ENCODE measurements at regions of chr17 and their contacts with region 1.

Region 1: GRCh38 chr17:35486920-35487732 is 38.6 kb upstream of the SLFN13 start:
- DNase-seq: peak in 1 of 2 donors; percentile 20
- ATAC-seq: no peak
- H3K4me3 ChIP-seq: peak overlapping the region; percentile 51 to 89 (median 58)
- H3K27ac ChIP-seq: peak overlapping the region in 2 of 4 donors; percentile 34 to 36
- H3K4me1 ChIP-seq: peaks cover 0 to 6% of the 10 kb centered on the region in 2 donors
- H3K27me3 ChIP-seq: peaks cover 55 to 68% (median 64%) of the 10 kb centered on the region in 3 donors
- CTCF ChIP-seq: no peak
- POLR2A ChIP-seq: no peak

Region 2: DNA sequence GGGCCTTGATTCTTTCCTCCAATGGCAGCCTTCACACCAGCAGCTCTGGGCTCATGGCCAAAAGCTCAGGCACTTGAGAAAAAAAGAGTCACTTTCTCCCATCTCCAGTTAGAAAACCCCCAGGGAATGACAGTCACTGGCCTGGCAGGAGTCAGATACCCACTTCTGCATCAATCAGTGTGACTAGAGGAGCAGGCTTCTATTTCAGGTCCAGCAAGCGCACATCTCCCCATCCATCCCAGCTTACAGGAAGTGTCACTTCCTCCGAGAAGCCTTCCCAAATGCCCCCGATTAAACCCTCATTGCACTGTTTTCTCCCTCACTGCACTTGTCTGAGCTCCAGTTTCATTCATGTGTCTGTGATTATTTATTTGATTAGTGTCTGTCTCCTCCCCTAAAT is 1093.7 kb before region 1 on chr17:
- in situ Hi-C with region 1: no loop called
- intact Hi-C with region 1: loop called (anchors 5 kb)
- DNase-seq: no peak
- ATAC-seq: no peak
- H3K4me3 ChIP-seq: no peak overlapping the region
- H3K27ac ChIP-seq: no peak overlapping the region
- H3K4me1 ChIP-seq: no peaks in the 10 kb centered on the region
- H3K27me3 ChIP-seq: no peaks in the 10 kb centered on the region
- CTCF ChIP-seq: no peak
- POLR2A ChIP-seq: no peak

Region 3: DNA sequence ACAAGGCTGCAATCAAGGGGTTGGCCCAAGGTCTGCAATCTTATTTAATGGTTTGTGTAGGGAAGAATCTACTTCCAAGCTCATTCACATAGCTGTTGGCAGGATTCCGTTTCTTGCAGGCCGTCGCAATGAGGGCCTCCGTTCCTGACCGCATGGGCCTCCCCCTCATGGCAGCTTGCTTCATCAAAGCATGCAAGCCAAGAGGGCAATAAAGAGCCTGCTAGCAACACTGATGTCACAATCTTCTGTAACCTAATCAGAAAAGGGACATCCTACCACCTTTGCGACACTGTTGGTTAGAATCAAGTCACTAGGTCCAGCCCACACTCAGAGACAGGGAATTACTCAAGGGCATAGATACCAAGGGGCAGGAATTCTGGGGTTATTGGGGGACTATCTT is 621.4 kb before region 1 on chr17:
- in situ Hi-C with region 1: no loop called
- intact Hi-C with region 1: no loop called
- DNase-seq: no peak
- ATAC-seq: no peak
- H3K4me3 ChIP-seq: no peak overlapping the region
- H3K27ac ChIP-seq: no peak overlapping the region
- H3K4me1 ChIP-seq: no peaks in the 10 kb centered on the region
- H3K27me3 ChIP-seq: no peaks in the 10 kb centered on the region
- CTCF ChIP-seq: no peak
- POLR2A ChIP-seq: no peak

Region 4: DNA sequence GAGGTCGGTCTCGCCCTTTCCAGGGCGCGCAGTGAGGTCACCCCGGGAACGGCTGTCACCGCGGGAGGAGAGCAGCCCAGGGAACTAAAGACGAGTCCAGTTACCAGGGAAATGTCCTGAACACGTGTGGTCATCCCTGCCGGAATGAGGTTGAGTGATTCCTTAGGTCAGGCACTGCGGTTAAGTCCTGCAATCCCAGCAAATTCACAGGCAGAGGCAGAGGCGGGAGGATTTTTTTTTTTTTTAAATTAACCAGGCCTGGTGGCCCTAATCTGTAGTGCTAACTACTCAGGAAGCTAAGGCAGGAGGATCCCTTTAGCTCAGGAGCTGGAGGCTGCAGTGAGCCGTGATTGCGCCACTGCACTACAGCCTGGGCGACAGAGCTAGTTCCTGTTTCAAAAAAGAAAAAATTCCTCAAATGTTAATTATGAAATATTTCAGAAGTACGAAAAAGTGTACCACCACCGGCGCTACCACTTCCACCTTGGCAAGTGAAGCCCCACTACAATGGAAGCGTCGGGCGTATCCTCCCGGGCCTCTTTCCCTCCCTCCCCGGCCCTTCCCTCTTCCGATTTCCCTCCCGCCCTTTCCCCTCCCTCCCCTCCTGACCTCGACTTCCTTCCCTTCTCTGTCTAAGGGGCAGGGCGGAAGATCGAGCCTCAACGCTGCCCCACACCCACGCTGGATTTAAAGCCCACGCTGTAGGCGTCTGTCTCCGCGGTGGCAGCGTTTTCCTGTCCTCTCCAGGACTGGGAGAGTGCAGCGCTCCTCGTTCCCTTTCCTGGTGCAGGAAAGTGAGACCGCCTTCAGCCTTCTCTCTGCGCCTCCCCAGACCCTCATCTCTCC is 141.0 kb before region 1 on chr17:
- in situ Hi-C with region 1: no loop called
- intact Hi-C with region 1: no loop called
- DNase-seq: peak; percentile 50 to 58
- ATAC-seq: peak; percentile 84 to 86
- H3K4me3 ChIP-seq: peak overlapping the region; percentile 48 to 67 (median 51)
- H3K27ac ChIP-seq: peak overlapping the region; percentile 65 to 74 (median 70)
- H3K4me1 ChIP-seq: peaks cover 9 to 22% of the 10 kb centered on the region in 2 donors
- H3K27me3 ChIP-seq: peaks cover 11 to 26% (median 25%) of the 10 kb centered on the region in 3 donors
- CTCF ChIP-seq: peak in 1 of 5 experiments; percentile 5
- POLR2A ChIP-seq: peak in 1 of 2 donors; percentile 19

Measured in gastrocnemius medialis (tissue), 4 donors.